ENCODE measurements at regions of chr20 and their contacts with region 1.

Region 1: GRCh38 chr20:13105864-13106457 is 97.2 kb downstream of the SPTLC3 start:
- DNase-seq: no peak
- ATAC-seq: no peak
- H3K4me3 ChIP-seq: no peak overlapping the region
- H3K27ac ChIP-seq: no peak overlapping the region
- H3K4me1 ChIP-seq: peaks cover 0 to 11% (median 0%) of the 10 kb centered on the region in 12 donors
- H3K27me3 ChIP-seq: no peaks in the 10 kb centered on the region
- CTCF ChIP-seq: peak; percentile 71 to 88 (median 78)
- POLR2A ChIP-seq: no peak

Region 2: GRCh38 chr20:11676630-11677284 is 1429.2 kb before region 1 on chr20:
- intact Hi-C with region 1: loop called in 6 of 10 experiments (anchors 5 to 10 kb)
- DNase-seq: peak; percentile 26 to 58 (median 48)
- ATAC-seq: peak in 3 of 4 donors; percentile 90 to 95 (median 90)
- H3K4me3 ChIP-seq: no peak overlapping the region
- H3K27ac ChIP-seq: no peak overlapping the region
- H3K4me1 ChIP-seq: peaks cover 0 to 22% (median 0%) of the 10 kb centered on the region in 12 donors
- H3K27me3 ChIP-seq: no peaks in the 10 kb centered on the region
- CTCF ChIP-seq: peak; percentile 72 to 92 (median 81)
- POLR2A ChIP-seq: no peak

Region 3: GRCh38 chr20:12925214-12925755 is 180.7 kb before region 1 on chr20:
- intact Hi-C with region 1: loop called (anchors 2 to 5 kb)
- DNase-seq: peak in 3 of 5 donors; percentile 30 to 36 (median 33)
- ATAC-seq: peak; percentile 71 to 94 (median 86)
- H3K4me3 ChIP-seq: peak overlapping the region in 1 of 12 donors; percentile 22
- H3K27ac ChIP-seq: no peak overlapping the region
- H3K4me1 ChIP-seq: peaks cover 0 to 5% (median 0%) of the 10 kb centered on the region in 12 donors
- H3K27me3 ChIP-seq: no peaks in the 10 kb centered on the region
- CTCF ChIP-seq: peak; percentile 65 to 88 (median 73)
- POLR2A ChIP-seq: no peak

Region 4: GRCh38 chr20:13009682-13010406 is 96.1 kb before region 1 on chr20:
- intact Hi-C with region 1: loop called in 1 of 10 experiments (anchors 1 kb)
- DNase-seq: peak in 2 of 5 donors; percentile 38 to 55
- ATAC-seq: peak; percentile 88 to 93 (median 89)
- H3K4me3 ChIP-seq: peak overlapping the region in 11 of 12 donors; percentile 24 to 63 (median 53)
- H3K27ac ChIP-seq: peak overlapping the region; percentile 22 to 85 (median 66)
- H3K4me1 ChIP-seq: peaks cover 0 to 28% (median 14%) of the 10 kb centered on the region in 12 donors
- H3K27me3 ChIP-seq: no peaks in the 10 kb centered on the region
- CTCF ChIP-seq: no peak
- POLR2A ChIP-seq: no peak

Measured in heart left ventricle (tissue), 16 donors.